ENCODE measurements at regions of chr6 and their contacts with region 1.

Region 1: GRCh38 chr6:158009114-158009891 is 27.6 kb downstream of the SYNJ2 start:
- DNase-seq: no peak
- H3K4me3 Mint-ChIP-seq: peak overlapping the region; percentile 63
- H3K27ac Mint-ChIP-seq: peak overlapping the region; percentile 63
- H3K4me1 Mint-ChIP-seq: peaks cover 65% of the 10 kb centered on the region
- H3K27me3 Mint-ChIP-seq: no peaks in the 10 kb centered on the region

Region 2: DNA sequence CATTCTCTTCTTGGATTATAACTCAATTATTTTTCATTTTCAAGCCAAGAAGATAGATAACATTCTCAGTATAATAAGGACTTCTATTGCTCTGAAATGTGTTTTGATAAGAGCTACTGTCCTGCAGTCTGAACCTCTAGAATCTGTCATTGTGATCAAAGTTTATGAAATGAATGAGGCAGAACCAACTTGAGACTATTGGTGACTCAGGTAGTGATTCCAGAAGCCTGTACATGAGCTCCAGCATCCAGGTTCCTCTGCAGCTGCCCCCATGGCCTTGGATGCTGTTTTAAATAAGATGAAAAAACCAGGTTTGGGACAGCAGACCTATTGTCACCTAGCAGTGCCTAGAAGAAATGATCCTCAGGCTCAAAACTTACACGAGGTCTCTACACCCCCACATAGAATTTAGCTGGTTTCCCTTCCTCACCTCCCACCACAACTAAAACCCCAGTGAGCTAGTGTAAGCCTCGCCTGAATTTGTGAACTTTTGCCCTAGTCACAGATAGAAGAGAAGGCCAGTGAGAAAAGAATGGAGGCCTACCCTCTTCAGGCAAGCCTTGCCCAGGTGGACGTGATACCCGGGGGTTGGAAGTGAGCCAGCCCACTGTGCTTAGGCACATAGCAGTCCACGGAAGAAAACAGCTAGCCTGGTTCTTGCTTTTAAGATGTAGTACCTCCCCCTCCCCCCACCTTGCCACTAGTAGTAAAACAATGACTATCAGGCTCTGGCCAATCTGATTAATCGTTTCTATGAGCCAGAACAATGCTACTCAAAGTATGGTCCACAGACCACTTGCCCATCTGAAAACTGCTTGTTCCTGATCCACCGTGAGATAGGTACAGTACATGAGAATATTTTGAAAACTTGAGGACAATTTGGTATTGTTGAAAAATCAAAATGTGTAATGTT is 100.7 kb before region 1 on chr6:
- intact Hi-C with region 1: no loop called
- DNase-seq: no peak
- H3K4me3 Mint-ChIP-seq: no peak overlapping the region
- H3K27ac Mint-ChIP-seq: peak overlapping the region; percentile 29
- H3K4me1 Mint-ChIP-seq: peaks cover 15% of the 10 kb centered on the region
- H3K27me3 Mint-ChIP-seq: no peaks in the 10 kb centered on the region

Region 3: DNA sequence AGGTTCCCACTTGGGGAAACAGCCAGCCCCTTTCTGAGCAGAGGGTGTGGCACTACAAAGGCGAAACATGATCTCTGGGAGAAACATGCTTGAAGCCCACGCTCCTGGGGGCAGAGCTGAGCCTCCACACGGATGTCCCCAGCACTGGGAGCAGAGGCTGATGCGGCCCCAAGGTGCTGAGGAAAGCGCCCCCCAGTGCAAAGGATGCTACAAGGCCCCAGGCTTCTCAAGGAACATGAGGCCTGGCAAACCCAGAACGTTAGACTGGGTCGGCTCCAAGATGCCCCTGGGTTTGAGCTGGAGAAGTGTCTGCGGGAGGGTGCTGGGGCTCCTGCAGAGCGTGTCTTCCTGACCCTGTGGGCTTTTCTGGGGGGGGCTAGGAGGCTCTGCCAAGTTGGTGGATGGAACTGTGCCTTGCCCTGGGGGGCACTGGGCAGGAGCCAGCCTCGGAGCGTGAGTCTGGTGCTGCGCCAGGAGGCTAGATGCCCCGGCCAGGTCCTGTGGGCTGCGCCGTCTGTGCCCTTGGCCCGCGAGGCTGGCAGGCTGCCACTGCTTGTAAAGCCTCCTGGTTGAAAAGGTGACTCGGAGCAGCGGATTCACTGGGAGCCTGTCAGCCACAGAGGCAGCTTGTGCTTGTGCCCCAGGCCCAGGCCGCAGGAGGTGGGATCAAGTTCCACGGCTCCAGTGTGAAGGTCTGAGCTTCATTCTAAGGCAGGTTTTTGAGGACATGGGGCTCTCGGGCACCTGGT is 19.6 kb before region 1 on chr6:
- intact Hi-C with region 1: loop called (anchors 2 kb)
- DNase-seq: no peak
- H3K4me3 Mint-ChIP-seq: peak overlapping the region; percentile 76
- H3K27ac Mint-ChIP-seq: peak overlapping the region; percentile 76
- H3K4me1 Mint-ChIP-seq: peaks cover 41% of the 10 kb centered on the region
- H3K27me3 Mint-ChIP-seq: no peaks in the 10 kb centered on the region

Region 4: DNA sequence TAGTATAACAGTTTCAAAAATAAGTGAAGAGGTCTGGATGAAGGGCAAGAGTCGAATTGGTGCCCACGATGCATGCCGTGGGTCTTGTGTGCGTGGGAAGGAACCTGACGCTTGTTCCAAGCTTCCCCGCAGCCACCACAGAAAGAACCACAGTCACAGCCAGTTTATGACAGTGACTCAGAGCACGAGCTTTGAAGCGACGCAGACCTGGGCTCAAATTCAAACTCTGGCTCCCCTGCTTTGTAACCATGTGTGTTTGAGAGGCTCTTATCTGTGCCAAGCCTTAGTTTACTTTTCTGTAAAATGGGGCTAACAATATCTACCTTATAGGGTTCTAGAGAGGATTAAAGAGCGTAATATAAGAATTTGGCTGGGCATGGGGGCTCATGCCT is 37.8 kb after region 1 on chr6:
- intact Hi-C with region 1: no loop called
- DNase-seq: peak; percentile 85
- H3K4me3 Mint-ChIP-seq: peak overlapping the region; percentile 55
- H3K27ac Mint-ChIP-seq: peak overlapping the region; percentile 64
- H3K4me1 Mint-ChIP-seq: peaks cover 34% of the 10 kb centered on the region
- H3K27me3 Mint-ChIP-seq: no peaks in the 10 kb centered on the region